Activated CD4-positive, alpha-beta memory T cell treated with anti-CD3 and anti-CD28 coated beads, Interleukin-2, amount 10 ng/mL, durations not matched to agents 7 days and 5 days (primary cell): ENCODE measurements at regions of chr1 and their contacts with region 1.

Region 1: GRCh38 chr1:149886396-149887195 is 12.8 kb upstream of the BOLA1 start:
- DNase-seq: peak; percentile 91
- H3K4me3 Mint-ChIP-seq: no peak overlapping the region
- H3K27ac Mint-ChIP-seq: no peak overlapping the region
- H3K4me1 Mint-ChIP-seq: peaks cover 16% of the 10 kb centered on the region
- H3K27me3 Mint-ChIP-seq: no peaks in the 10 kb centered on the region

Region 2: DNA sequence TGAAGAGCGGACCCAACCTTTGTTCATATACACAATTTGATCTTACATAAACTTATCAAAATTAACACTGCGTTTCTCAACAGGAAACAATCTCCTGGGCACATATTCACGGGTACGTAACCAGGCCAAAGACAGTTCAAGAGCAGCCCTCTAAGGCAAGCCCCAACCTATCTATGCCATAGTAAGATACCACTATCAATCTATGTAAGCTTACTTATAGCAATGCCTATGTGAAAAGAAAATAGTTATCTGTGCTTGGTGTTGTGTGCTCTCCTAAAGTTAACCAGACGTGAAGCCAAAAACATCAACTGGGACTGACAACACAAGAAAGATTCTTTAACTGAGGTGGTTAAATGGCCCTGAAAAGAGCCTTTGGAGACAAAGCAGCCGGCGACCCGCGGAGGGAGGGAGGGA is 36.6 kb before region 1 on chr1:
- CTCF ChIA-PET with region 1: interaction called, 9 read pairs
- POLR2A ChIA-PET with region 1: interaction called, 314 read pairs
- DNase-seq: no peak
- H3K4me3 Mint-ChIP-seq: peak overlapping the region; percentile 87
- H3K27ac Mint-ChIP-seq: peak overlapping the region; percentile 93
- H3K4me1 Mint-ChIP-seq: peaks cover 48% of the 10 kb centered on the region
- H3K27me3 Mint-ChIP-seq: no peaks in the 10 kb centered on the region

Region 3: DNA sequence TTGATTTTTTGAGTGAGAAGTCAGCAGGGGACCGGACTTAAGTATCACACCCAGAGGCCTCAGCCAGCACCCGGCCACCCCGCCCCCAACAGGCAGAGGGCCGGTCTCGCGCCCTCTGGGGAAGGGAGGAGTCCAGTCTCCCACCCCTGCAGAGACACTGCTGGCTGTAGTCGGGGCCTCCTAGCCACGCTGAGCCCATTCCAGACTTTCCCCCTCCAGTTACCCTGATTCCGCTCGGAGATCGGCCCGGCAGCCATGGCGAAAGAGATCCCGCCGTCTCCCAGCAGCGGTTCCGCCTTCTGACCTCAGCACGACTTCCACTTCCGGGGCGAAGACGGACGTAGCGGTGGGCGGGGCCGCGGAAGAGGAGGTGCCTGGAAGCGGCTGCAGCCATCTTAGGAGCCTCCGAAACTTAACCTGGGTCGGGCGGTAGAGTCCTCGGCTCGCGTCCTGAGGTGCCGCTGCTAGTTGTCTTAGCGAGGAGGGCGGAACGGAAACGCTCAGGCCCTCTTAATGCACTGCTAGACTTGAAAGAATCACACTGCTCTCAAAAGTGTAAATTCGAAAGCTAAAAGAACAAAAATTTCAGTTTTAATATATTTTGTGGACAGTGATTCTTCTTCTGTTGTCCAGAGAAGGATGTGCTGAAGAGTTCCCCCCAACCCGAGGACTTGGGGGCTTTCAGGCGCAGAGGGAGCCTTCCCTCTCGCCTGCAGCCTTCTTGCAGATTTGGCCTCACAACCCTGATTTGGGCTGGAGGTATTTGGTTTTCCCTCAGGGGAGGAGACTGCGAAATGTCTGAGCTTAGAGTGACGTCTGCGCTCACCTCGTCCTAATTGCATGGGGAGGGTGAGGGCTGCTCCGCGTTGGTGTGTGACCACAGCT is 41.1 kb after region 1 on chr1 and contains the start of gene SF3B4:
- CTCF ChIA-PET with region 1: interaction called, 18 read pairs
- POLR2A ChIA-PET with region 1: interaction called, 160 read pairs
- DNase-seq: peak; percentile 96
- H3K4me3 Mint-ChIP-seq: peak within 1 kb of the TSS; percentile 97
- H3K27ac Mint-ChIP-seq: peak within 1 kb of the TSS; percentile 95
- H3K4me1 Mint-ChIP-seq: peaks cover 74% of the 10 kb centered on the region
- H3K27me3 Mint-ChIP-seq: no peaks in the 10 kb centered on the region
- total RNA-seq, gene SF3B4: 82.3 to 84.3 TPM

Region 4: DNA sequence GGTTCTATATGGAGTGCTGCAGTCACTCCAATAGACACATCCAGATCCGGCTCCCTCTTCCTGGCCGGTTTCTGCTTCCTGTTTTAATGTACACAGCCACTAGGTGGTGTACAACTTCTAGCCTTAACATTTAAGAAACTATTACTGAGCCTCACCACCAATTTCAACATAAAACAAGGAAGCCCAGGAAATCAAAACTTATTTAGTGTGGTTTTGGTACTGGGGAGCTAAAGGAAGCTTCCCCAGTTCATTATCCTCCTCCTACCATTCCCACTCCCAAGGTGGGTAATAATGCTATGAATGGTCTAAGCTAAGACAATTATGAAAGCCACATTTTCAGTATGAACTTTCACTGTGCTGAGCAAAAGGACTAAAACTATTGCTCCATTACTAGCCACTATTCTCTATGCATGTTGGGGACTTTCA is 75.5 kb after region 1 on chr1:
- CTCF ChIA-PET with region 1: interaction called, 3 read pairs
- POLR2A ChIA-PET with region 1: interaction called, 11 read pairs
- DNase-seq: peak; percentile 54
- H3K4me3 Mint-ChIP-seq: no peak overlapping the region
- H3K27ac Mint-ChIP-seq: no peak overlapping the region
- H3K4me1 Mint-ChIP-seq: peaks cover 23% of the 10 kb centered on the region
- H3K27me3 Mint-ChIP-seq: no peaks in the 10 kb centered on the region

Region 5: DNA sequence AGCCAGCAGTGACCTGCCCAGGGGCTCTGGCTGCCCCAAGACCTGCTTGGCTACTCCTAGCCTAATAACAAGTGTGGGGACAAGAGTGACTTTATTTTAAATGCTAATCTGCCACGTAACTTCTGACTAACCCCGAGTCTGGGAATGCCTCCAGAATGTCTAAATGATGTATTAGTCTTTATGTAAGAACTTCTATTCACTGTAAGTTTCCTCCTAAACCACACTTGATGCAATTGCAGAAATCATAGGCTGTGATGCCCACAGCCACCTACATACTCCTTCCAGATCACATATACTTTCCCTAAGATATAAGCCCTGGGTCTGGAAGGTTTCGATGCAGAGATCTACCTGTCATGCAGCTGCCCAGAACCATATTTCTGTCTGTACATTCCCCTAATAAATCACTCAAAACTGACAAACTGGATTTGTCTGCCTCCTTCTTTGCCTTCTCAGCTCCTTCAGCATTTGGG is 175.1 kb after region 1 on chr1:
- CTCF ChIA-PET with region 1: interaction called, 8 read pairs
- POLR2A ChIA-PET with region 1: interaction called, 83 read pairs
- DNase-seq: no peak
- H3K4me3 Mint-ChIP-seq: no peak overlapping the region
- H3K27ac Mint-ChIP-seq: no peak overlapping the region
- H3K4me1 Mint-ChIP-seq: peaks cover 13% of the 10 kb centered on the region
- H3K27me3 Mint-ChIP-seq: no peaks in the 10 kb centered on the region

Region 6: GRCh38 chr1:150149271-150150132 is 262.9 kb after region 1 on chr1 and contains the start of gene PLEKHO1:
- CTCF ChIA-PET with region 1: interaction called, 5 read pairs
- POLR2A ChIA-PET with region 1: interaction called, 68 read pairs
- DNase-seq: peak; percentile 87
- H3K4me3 Mint-ChIP-seq: peak within 1 kb of the TSS; percentile 86
- H3K27ac Mint-ChIP-seq: peak within 1 kb of the TSS; percentile 93
- H3K4me1 Mint-ChIP-seq: peaks cover 66% of the 10 kb centered on the region
- H3K27me3 Mint-ChIP-seq: peaks cover 1% of the 10 kb centered on the region
- total RNA-seq, gene PLEKHO1: 89.8 to 92.9 TPM

Region 7: GRCh38 chr1:150293433-150294168 is 407.0 kb after region 1 on chr1 and contains the start of gene MRPS21:
- CTCF ChIA-PET with region 1: no interaction called
- POLR2A ChIA-PET with region 1: no interaction called
- DNase-seq: peak; percentile 90
- H3K4me3 Mint-ChIP-seq: peak within 1 kb of the TSS; percentile 88
- H3K27ac Mint-ChIP-seq: peak within 1 kb of the TSS; percentile 79
- H3K4me1 Mint-ChIP-seq: peaks cover 35% of the 10 kb centered on the region
- H3K27me3 Mint-ChIP-seq: no peaks in the 10 kb centered on the region
- total RNA-seq, gene MRPS21: 67.2 to 68.2 TPM

Region 8: DNA sequence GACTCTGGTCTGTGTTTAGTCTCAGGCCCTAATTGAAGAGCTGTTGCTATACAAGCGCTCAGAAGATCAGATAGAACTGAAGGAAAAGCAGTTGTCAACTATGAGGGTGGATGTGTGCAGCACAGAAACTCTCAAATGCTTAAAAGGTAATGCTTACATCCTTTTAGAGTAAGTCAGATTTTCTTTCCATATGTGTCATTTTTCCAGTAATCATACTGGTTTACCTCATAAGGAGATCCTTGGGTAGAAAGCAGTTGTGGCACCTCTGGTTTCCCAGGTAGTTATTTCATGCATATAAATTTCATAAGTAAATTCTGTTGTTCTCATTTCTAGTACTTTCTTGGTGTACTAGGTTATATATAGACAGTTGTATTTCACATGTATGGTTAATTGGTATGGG is 557.6 kb after region 1 on chr1:
- CTCF ChIA-PET with region 1: no interaction called
- POLR2A ChIA-PET with region 1: no interaction called
- DNase-seq: no peak
- H3K4me3 Mint-ChIP-seq: no peak overlapping the region
- H3K27ac Mint-ChIP-seq: peak overlapping the region; percentile 9
- H3K4me1 Mint-ChIP-seq: peaks cover 11% of the 10 kb centered on the region
- H3K27me3 Mint-ChIP-seq: no peaks in the 10 kb centered on the region

Region 9: DNA sequence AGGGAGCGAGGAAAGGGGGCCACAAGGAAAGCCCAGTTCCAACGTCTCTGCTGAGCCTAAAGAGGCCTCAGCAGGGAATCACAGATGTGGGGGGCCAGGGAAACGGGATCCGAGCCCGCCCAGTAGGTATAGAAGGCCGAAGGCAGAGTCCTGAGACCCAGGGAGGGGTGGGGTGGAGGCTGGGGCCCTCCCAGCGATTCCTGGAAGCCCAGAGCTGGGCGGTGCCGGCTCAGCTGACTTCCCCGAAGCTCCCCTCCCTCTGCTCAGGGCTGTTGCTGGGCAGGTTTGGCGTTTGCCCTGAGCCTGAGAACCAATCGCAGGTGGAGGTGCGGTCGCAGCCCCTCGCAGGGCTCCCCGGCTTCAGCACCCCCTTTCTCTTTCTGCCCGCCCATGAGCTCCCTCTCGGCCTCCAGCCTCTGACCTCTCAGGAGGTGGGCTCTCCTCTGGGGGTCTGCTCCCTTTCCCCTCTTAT is 675.4 kb after region 1 on chr1:
- CTCF ChIA-PET with region 1: no interaction called
- POLR2A ChIA-PET with region 1: interaction called, 27 read pairs
- DNase-seq: peak; percentile 93
- H3K4me3 Mint-ChIP-seq: peak overlapping the region; percentile 87
- H3K27ac Mint-ChIP-seq: peak overlapping the region; percentile 100
- H3K4me1 Mint-ChIP-seq: peaks cover 62% of the 10 kb centered on the region
- H3K27me3 Mint-ChIP-seq: no peaks in the 10 kb centered on the region